GM10248 (cell line): ENCODE measurements at regions of chr18 and their contacts with region 1.

Region 1: DNA sequence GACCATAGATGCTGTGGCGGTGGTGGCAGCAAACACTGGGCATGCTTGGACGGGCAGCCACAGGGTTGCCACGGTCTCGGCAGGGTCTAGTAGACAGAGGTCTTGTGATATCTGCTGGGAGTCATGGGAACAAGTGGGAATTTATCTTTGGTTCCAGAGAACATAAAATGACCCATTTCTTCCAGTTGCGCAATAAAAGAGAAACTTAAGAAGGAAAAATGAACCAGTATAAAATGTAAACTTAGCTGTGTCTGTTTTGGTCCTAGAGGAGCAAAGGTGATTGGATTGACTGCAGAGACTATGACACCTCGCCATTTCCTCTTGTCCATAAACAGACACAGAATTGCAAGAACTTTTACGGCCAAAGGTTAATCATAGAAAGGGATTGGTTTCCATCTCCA is 132.6 kb upstream of the RBBP8 start:
- DNase-seq: no peak
- CTCF ChIP-seq: no peak

Region 2: GRCh38 chr18:22102953-22103646 is 697.5 kb before region 1 on chr18:
- CTCF ChIA-PET with region 1: no interaction called
- POLR2A ChIA-PET with region 1: no interaction called
- DNase-seq: no peak
- CTCF ChIP-seq: no peak

Region 3: DNA sequence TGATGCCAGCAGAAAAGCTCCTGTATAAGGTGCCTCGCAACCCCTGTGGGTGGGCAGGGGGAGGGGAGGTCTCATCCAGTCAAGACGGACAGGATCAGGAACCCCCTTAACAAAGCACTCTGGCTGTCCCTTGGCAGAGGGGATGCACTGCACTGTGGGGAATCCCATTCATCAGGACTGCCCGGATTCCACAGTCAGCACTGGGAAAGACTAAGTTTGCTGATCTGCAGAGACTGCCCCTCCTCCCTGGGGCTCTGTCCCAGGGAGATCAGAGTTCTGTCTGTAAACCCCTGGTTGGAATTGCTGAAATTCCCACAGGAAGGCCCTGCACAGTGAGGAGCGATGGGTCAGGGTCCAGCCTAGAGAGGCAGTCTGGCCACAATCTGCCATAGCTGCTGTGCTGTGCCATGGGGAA is 16.9 kb before region 1 on chr18:
- CTCF ChIA-PET with region 1: interaction called, 11 read pairs
- POLR2A ChIA-PET with region 1: no interaction called
- DNase-seq: no peak
- CTCF ChIP-seq: no peak

Region 4: DNA sequence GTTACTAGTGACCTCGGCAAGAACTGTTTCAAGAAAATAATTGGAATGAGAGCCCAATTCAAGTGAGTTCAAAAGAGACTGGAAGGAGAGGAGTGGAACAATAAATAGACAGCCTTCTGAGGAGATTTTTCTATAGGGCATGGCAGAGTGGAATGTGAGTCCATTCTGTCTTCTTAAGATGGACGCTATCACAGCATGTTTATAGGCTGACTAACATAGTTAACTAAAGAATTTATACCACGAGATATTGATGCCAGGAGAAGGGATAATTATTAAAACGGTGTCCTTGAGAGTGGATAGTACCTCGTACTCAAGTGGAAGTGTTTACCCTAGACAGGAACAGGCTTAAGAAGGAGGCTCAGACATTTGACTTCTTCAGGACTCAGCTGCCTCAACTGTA is 11.0 kb before region 1 on chr18:
- CTCF ChIA-PET with region 1: interaction called, 13 read pairs
- POLR2A ChIA-PET with region 1: no interaction called
- DNase-seq: no peak
- CTCF ChIP-seq: no peak

Region 5: GRCh38 chr18:22813648-22814328 is 13.2 kb after region 1 on chr18:
- CTCF ChIA-PET with region 1: interaction called, 29 read pairs
- POLR2A ChIA-PET with region 1: no interaction called
- DNase-seq: peak; percentile 34
- CTCF ChIP-seq: peak; percentile 71

Region 6: GRCh38 chr18:22865354-22866116 is 65.0 kb after region 1 on chr18:
- CTCF ChIA-PET with region 1: no interaction called
- POLR2A ChIA-PET with region 1: no interaction called
- DNase-seq: no peak
- CTCF ChIP-seq: no peak

Region 7: DNA sequence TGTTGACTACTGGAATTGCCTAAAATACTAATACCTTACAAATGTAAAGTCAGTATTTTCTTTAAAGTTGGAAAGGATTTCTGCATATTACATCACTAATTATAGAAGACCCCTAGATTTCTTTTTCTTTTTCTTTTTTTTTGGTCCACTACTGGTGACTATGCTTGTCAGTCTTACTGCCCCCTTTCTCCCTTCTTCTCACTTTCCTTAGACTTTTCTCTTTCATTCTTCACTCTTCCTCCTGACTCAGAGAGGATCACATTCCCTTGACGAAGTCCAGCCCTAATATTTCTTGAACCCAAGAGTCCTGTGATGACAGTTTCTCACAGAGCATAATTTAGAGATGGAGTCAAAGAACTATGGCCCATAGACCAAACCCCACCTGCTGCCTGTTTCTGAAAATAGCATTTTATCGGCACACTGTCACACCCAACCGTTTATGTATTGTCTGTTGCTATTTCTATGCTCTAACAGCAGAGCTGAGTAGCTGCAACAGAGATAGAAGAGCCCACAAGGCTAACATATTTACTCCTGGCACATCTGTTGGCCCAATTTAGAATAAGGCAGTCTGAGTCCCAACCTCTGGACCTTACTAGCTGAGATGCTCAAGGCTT is 611.9 kb after region 1 on chr18:
- CTCF ChIA-PET with region 1: interaction called, 11 read pairs
- POLR2A ChIA-PET with region 1: no interaction called
- DNase-seq: no peak
- CTCF ChIP-seq: no peak